Gastrocnemius medialis (tissue), 4 donors: ENCODE measurements at regions of chr11 and their contacts with region 1.

Region 1: GRCh38 chr11:46554205-46555055 is 39.4 kb downstream of the AMBRA1 start:
- DNase-seq: peak in 1 of 2 donors; percentile 20
- ATAC-seq: peak; percentile 97
- H3K4me3 ChIP-seq: peak overlapping the region in 1 of 4 donors; percentile 37
- H3K27ac ChIP-seq: peak overlapping the region; percentile 79 to 90 (median 84)
- H3K4me1 ChIP-seq: peaks cover 32 to 36% of the 10 kb centered on the region in 2 donors
- H3K27me3 ChIP-seq: no peaks in the 10 kb centered on the region
- CTCF ChIP-seq: no peak
- POLR2A ChIP-seq: no peak

Region 2: DNA sequence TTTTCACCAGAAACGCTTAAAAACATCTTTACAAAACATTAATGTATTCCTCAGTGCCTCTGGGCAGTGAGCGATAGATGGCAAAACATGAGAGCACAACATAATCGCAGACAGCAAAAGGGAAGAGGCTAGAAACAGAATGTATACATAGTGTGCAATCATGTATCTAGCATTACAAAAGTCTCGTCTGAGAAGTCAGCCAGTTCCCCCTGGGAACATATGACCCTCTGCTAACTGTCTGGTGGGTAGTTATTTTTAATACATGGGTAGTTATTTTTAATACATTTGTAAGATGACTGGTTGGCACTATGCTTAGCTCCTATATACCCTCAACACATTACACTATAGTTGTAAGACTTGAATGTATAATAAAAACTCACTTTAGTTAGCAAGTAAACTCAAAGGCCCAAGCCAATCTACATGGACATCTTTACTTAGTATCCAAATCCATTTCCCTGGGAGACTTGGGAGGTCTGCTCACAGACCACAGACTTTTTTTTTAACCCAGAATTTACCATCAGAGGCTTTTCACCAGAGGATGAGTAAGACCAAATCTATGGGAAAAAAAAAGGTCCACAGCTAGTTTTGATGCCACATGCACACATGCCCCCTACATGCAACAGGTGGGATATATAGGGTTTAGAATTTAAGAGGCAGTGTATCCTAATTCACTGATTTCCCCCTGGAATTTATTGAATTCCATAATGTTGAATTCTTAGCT is 32.3 kb before region 1 on chr11:
- in situ Hi-C with region 1: no loop called
- intact Hi-C with region 1: no loop called
- DNase-seq: no peak
- ATAC-seq: peak; percentile 63 to 65
- H3K4me3 ChIP-seq: no peak overlapping the region
- H3K27ac ChIP-seq: peak overlapping the region; percentile 14 to 43 (median 32)
- H3K4me1 ChIP-seq: peaks cover 47 to 62% of the 10 kb centered on the region in 2 donors
- H3K27me3 ChIP-seq: no peaks in the 10 kb centered on the region
- CTCF ChIP-seq: no peak
- POLR2A ChIP-seq: no peak

Region 3: DNA sequence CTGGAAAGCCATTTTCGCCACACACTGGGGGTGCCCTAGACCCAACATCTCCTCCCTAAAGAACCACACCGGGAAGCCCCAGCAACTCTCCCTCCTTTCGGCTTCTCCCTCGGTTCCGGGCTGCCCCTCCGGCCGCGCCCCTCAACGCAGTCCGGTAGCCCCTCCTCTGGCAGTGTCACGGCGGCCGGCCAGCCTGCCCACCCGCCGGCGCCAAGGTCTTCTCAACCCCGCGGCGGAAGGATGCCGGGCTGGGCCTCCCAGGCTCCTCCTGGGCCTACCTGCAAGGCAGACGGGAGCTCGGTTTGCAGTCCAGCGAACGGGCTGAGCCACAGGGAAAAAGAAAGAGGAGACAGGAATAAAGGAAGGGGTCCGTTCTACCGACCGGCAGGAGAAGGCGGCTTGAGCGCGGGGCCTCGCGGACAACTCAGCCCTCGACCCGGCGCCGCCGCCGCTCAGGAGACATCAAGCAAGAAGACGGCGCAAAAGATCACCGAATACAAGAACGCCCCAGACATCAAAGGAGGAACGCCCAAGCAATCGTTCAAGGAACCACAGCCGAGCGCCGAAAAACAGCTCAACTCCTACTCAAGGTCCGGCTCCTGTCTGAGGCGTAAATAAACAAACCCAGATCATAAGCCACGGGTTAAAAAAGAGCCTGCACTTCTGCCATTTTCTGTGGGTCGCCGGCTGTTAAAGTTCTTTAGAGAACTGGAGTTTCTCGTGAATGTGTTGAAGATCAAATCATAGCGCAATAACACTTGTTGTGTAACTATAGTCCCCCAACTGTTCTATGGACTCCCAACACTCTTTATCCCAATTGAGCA is 39.3 kb after region 1 on chr11 and contains the start of gene AMBRA1:
- in situ Hi-C with region 1: no loop called
- intact Hi-C with region 1: loop called (anchors 5 kb)
- DNase-seq: peak; percentile 82 to 87
- ATAC-seq: peak; percentile 95 to 98
- H3K4me3 ChIP-seq: peak within 1 kb of the TSS; percentile 85 to 95 (median 90)
- H3K27ac ChIP-seq: peak within 1 kb of the TSS; percentile 75 to 93 (median 85)
- H3K4me1 ChIP-seq: peaks cover 28 to 32% of the 10 kb centered on the region in 2 donors
- H3K27me3 ChIP-seq: no peaks in the 10 kb centered on the region
- CTCF ChIP-seq: no peak
- POLR2A ChIP-seq: peak; percentile 47 to 57
- total RNA-seq, gene AMBRA1: 17.3 to 24.3 (median 20.7) TPM